ENCODE measurements at regions of chr15 and their contacts with region 1.

Region 1: DNA sequence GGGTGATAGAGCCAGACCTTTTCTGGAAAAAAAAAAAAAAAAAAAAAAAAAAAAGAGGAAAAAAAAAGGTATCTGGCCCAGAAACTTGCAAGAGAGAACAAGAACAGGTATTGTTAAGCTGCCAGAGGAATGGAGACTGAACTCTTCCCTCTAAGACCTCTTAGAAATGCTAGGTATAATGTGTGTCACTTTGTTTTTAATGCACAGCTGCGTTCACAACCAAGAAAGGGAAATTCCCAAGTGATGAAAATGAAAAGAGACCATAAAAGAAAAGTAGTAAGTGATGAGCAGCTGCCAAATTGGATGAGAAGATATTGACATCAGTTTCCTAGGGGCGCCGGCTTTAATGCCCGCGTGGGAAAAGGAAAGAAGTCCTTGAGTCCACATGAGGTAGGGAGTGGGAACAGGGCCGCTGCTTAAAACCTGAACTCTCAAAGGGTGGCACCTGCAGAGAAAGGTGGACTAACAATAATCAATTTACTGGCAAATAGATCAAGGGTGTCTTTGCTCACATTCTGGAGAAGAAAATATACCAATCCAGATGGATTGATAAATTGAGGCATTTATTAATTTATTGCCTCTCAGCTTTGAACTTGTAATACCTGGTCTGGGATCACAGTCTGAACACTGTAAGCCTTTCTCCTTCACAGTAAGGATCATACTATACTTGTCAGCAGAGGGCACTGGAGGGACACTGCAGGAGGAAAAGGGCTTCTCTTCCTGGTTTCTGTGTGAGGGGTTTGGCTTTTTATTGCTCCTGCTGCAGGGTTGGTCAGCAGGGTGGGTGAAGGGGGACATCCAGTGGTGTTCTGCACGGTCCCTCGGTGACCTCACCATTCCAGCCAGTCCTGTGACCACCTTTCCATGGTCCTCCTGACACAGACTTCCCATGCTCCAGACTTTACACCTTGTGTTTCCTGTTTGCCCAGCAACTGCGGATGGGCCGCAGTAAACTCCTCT is 131.6 kb downstream of the AQP9 start:
- DNase-seq: peak in 1 of 5 donors; percentile 52
- ATAC-seq: peak; percentile 84 to 93 (median 91)
- H3K4me3 ChIP-seq: no peak overlapping the region
- H3K27ac ChIP-seq: no peak overlapping the region
- H3K4me1 ChIP-seq: peaks cover 0 to 6% (median 0%) of the 10 kb centered on the region in 12 donors
- H3K27me3 ChIP-seq: no peaks in the 10 kb centered on the region
- CTCF ChIP-seq: peak; percentile 61 to 82 (median 68)
- POLR2A ChIP-seq: peak in 1 of 2 donors; percentile 12

Region 2: GRCh38 chr15:58124585-58124984 is 145.2 kb before region 1 on chr15:
- intact Hi-C with region 1: no loop called
- DNase-seq: no peak
- ATAC-seq: no peak
- H3K4me3 ChIP-seq: no peak overlapping the region
- H3K27ac ChIP-seq: no peak overlapping the region
- H3K4me1 ChIP-seq: no peaks in the 10 kb centered on the region
- H3K27me3 ChIP-seq: peaks cover 0 to 9% (median 0%) of the 10 kb centered on the region in 9 donors
- CTCF ChIP-seq: no peak
- POLR2A ChIP-seq: no peak

Region 3: DNA sequence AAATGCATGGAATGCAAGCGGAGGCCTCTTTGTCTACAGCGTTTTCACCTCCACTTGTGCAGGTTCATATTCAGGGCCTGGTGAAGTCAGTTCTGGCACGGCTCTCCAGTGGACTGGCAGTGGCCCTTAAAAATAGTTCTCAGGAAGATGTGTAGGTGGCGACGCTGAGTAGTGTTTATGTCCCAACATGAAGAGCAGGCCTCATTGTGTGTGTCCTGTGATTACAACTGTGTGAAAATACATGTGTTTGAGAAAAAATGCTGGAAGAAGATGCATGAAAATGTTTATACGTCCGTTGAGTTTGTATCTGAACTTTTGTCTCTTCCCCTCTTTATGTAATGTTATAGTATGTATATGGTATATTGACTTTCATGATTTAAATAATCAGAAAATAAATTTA is 169.2 kb after region 1 on chr15:
- intact Hi-C with region 1: loop called in 4 of 10 experiments (anchors 10 kb)
- DNase-seq: peak in 4 of 5 donors; percentile 47 to 70 (median 66)
- ATAC-seq: peak; percentile 72 to 86 (median 76)
- H3K4me3 ChIP-seq: no peak overlapping the region
- H3K27ac ChIP-seq: peak overlapping the region in 10 of 12 donors; percentile 25 to 88 (median 85)
- H3K4me1 ChIP-seq: peaks cover 5 to 48% (median 37%) of the 10 kb centered on the region in 12 donors
- H3K27me3 ChIP-seq: no peaks in the 10 kb centered on the region
- CTCF ChIP-seq: peak in 9 of 12 donors; percentile 10 to 53 (median 34)
- POLR2A ChIP-seq: no peak

Region 4: GRCh38 chr15:58521293-58521991 is 251.7 kb after region 1 on chr15:
- intact Hi-C with region 1: loop called in 1 of 10 experiments (anchors 10 kb)
- DNase-seq: peak in 3 of 5 donors; percentile 44 to 78 (median 66)
- ATAC-seq: peak in 3 of 4 donors; percentile 31 to 55 (median 35)
- H3K4me3 ChIP-seq: peak overlapping the region in 1 of 12 donors; percentile 4
- H3K27ac ChIP-seq: peak overlapping the region in 6 of 12 donors; percentile 5 to 82 (median 19)
- H3K4me1 ChIP-seq: peaks cover 3 to 94% (median 33%) of the 10 kb centered on the region in 12 donors
- H3K27me3 ChIP-seq: no peaks in the 10 kb centered on the region
- CTCF ChIP-seq: no peak
- POLR2A ChIP-seq: no peak

Region 5: GRCh38 chr15:58574631-58575030 is 304.9 kb after region 1 on chr15:
- intact Hi-C with region 1: loop called in 1 of 10 experiments (anchors 10 kb)
- DNase-seq: no peak
- ATAC-seq: peak in 1 of 4 donors; percentile 20
- H3K4me3 ChIP-seq: no peak overlapping the region
- H3K27ac ChIP-seq: no peak overlapping the region
- H3K4me1 ChIP-seq: no peaks in the 10 kb centered on the region
- H3K27me3 ChIP-seq: no peaks in the 10 kb centered on the region
- CTCF ChIP-seq: no peak
- POLR2A ChIP-seq: no peak

Region 6: DNA sequence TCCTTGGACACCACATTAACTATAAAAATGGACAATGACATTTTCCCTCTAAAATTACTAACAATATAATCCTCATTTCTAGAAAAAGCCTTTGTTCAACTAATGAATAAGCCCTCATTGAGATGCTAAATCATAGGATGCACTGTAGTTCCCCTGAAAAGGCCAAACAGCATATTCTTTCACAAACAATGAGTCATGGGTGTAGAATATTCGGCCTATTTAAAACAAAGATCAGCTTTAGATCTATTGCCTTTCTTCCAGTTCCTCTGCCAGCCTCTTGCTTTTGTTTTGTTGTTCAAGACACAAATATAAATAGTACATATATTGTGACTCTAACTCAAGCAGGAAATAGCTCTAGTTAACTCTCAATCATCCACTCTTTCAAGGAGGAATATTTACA is 397.2 kb after region 1 on chr15:
- intact Hi-C with region 1: loop called in 1 of 10 experiments (anchors 10 kb)
- DNase-seq: no peak
- ATAC-seq: peak in 1 of 4 donors; percentile 20
- H3K4me3 ChIP-seq: no peak overlapping the region
- H3K27ac ChIP-seq: peak overlapping the region in 1 of 12 donors; percentile 3
- H3K4me1 ChIP-seq: peaks cover 0 to 27% (median 2%) of the 10 kb centered on the region in 12 donors
- H3K27me3 ChIP-seq: no peaks in the 10 kb centered on the region
- CTCF ChIP-seq: no peak
- POLR2A ChIP-seq: no peak

Region 7: DNA sequence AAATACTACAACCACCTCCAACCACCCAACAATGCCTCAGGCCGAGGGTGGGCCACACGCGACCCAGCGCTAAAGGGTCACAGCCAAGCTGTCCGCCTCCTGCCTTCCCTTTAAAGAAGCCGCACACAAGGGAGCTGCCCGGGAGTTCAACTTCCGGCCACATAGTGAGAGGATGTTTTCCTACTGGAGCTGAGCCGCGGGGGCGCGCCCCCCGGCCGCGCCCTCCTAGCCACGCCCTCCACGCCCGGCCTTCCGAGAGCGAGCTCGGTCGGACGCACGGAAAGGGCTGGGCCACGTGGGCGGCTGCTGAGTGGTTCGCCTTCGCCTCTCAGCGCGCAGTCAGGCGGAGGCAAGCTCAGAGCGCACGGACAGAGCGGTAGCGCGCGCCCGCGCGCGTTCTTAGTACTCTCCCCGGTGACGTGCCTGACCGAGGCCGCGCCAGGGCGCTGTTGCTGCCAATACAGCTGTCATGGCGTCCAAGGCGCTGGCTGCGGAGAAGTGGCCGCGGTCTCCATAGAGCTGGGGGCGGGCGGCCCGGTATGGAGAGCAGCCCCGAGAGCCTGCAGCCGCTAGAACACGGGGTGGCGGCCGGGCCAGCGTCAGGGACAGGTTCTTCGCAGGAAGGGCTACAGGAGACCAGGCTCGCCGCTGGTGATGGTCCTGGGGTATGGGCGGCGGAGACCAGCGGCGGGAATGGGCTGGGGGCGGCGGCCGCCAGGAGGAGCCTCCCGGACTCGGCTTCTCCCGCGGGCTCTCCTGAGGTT is 501.3 kb after region 1 on chr15 and contains the start of gene MINDY2:
- intact Hi-C with region 1: loop called in 1 of 10 experiments (anchors 10 kb)
- DNase-seq: peak; percentile 98 to 100 (median 99)
- ATAC-seq: peak; percentile 97 to 98 (median 98)
- H3K4me3 ChIP-seq: peak within 1 kb of the TSS; percentile 79 to 99 (median 93)
- H3K27ac ChIP-seq: peak within 1 kb of the TSS; percentile 90 to 99 (median 98)
- H3K4me1 ChIP-seq: peaks cover 0 to 50% (median 33%) of the 10 kb centered on the region in 12 donors
- H3K27me3 ChIP-seq: no peaks in the 10 kb centered on the region
- CTCF ChIP-seq: peak in 10 of 12 donors; percentile 19 to 55 (median 31)
- POLR2A ChIP-seq: peak in 1 of 2 donors; percentile 98
- total RNA-seq, gene MINDY2: 22.2 to 31.8 (median 26.7) TPM

Measured in heart left ventricle (tissue), 16 donors.